ENCODE measurements at regions of chr3 and their contacts with region 1.

Region 1: GRCh38 chr3:183766745-183767606 is 58.4 kb downstream of the MAP6D1 start:
- DNase-seq: peak; percentile 78

Region 2: DNA sequence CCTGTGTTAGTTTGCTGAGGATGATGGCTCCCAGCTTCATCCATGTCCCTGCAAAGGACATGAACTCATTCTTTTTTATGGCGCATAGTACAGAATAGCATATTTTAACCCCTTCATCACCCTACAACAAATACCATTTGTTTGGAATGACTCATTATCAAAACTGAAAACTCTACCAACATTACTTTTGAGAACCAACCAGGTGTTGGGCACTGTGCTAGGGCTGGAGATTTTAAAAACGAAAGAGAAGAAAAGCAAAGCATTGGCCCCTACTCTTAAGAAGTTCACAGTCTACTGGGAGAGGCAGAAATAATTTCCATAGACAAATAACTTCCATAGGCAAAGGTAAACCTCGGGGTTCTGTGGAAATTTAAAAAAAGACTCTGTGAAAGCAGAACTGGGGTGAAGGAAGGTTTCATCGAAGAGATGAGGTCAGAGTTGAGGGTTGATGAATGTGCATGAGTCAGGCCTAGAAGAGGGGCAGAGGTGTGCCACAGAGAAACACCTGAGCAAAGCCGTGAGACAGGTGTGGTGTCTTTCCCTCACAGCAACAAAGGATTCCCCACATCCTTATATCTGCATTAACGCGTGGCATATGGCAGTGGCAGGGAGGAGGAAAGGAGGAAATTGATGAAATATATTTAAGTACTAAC is 389.5 kb before region 1 on chr3:
- in situ Hi-C with region 1: no loop called
- DNase-seq: no peak

Region 3: DNA sequence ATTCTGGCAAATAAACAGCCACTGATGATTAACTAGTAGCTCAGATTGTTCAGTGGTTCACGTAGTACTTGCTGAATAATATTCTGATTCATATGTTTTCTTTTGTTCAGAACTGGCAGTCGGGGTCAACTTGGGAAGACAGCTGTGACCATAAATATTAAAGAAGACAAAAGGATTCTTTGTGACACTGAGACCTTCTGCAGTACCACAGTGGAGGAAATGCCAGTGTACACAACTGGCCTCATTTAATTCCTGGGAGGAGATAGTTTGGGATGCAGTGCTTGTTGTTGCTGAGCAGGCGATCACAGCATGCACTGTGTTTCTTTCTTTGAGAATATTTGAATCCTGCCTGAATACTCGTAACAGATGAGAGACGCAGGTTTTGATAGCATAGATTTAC is 311.9 kb before region 1 on chr3:
- in situ Hi-C with region 1: loop called (anchors 25 kb)
- DNase-seq: no peak